Mammary epithelial cell (primary cell): ENCODE measurements at regions of chr1 and their contacts with region 1.

Region 1: GRCh38 chr1:39098546-39099250 is 72.5 kb downstream of the NDUFS5 start:
- DNase-seq: peak; percentile 88
- H3K4me3 ChIP-seq: no peak overlapping the region
- H3K27ac ChIP-seq: peak overlapping the region; percentile 24
- H3K4me1 ChIP-seq: peaks cover 20% of the 10 kb centered on the region
- H3K27me3 ChIP-seq: no peaks in the 10 kb centered on the region
- CTCF ChIP-seq: peak; percentile 82 to 86

Region 2: DNA sequence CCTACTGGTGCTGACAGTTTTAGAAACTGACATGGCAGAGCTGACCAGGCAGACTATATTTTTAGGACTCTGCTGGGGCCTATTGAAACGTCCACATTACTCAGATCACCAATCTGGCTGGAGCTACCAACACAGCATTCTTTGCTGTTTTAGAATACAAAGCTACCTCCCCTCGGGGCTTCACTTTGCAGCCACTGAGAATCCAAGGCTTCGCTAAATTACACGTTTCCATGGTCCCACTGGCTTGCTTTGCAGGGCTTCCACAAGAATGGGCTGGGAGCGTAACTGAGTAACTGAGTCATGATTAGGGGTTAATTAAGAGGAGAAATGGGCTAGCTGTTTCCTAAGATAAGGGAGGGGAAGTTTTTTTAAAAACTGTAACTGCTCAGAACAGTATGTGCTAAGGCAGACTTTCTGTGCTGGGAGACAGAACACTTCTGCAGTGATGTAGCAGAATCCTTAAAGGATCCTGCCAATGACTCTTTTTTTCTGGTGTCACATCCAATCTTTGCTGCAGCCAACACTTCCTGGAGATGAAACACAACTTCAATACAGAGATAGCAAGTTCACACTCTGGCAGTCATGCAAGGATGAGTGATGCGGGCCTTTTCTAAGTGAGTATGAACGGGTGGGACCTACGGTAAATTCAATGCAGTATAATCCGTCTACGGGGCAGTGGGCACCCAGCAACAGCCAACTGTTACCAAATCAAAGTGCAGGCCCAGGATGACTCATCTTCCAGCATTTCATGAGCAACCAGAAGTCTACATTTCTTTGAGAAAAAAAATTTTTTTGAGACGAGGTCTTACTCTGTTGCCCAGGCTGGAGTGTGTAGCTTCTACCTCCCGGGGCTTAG is 51.1 kb before region 1 on chr1:
- CTCF ChIA-PET with region 1: no interaction called
- dilution Hi-C with region 1: loop called (anchors 5 kb)
- in situ Hi-C with region 1: no loop called
- intact Hi-C with region 1: no loop called
- DNase-seq: peak; percentile 12
- H3K4me3 ChIP-seq: no peak overlapping the region
- H3K27ac ChIP-seq: no peak overlapping the region
- H3K4me1 ChIP-seq: no peaks in the 10 kb centered on the region
- H3K27me3 ChIP-seq: no peaks in the 10 kb centered on the region
- CTCF ChIP-seq: no peak

Region 3: DNA sequence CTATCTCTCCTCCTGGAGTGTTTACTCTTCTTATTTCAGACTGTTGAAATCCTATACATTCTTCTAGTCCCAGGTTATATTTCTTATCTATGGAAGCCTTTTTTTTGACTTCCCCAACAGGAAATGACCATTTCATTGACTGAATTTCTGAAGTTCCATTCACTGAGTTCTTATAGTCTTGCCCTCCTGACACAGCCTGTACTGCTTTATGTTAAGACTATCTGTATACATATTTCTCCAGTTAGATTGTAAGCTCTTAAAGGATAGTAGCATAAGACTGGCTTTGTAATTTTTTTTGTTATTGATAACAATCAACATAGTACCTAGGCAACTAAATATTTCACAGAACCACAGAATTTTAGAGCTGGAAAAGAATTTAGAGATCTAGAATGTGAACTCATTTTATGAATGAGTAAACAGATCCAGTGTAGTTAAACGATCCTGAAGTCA is 90.9 kb after region 1 on chr1:
- CTCF ChIA-PET with region 1: interaction called, 7 read pairs
- dilution Hi-C with region 1: loop called (anchors 5 kb)
- in situ Hi-C with region 1: loop called (anchors 5 kb)
- intact Hi-C with region 1: loop called (anchors 1 kb)
- DNase-seq: peak; percentile 63
- H3K4me3 ChIP-seq: no peak overlapping the region
- H3K27ac ChIP-seq: peak overlapping the region; percentile 96
- H3K4me1 ChIP-seq: peaks cover 69% of the 10 kb centered on the region
- H3K27me3 ChIP-seq: no peaks in the 10 kb centered on the region
- CTCF ChIP-seq: no peak

Region 4: DNA sequence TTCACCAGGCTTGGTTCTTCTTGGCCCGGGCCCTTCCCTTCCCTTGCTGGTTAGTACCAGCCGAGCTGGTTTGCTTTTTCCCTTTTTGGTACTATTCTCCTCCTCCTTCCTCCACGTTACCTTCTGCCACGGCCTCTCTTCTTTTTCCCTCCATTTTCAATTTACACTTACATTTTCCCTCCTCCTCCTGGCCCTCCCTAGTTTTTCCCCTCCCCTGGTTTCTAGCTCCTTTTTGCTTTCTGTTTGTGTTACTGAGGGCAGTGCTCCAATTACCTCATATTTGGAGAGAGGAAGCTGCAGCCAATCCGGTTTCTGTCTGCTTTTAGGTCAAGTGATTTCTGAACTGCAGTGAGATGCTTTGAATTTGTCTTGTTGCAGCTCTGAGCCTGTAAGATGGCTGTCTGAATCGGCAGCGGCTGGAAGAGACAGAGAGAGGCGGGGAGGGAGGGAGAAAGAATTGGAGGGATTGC is 169.4 kb after region 1 on chr1:
- CTCF ChIA-PET with region 1: no interaction called
- dilution Hi-C with region 1: no loop called
- in situ Hi-C with region 1: loop called (anchors 5 to 10 kb)
- intact Hi-C with region 1: no loop called
- DNase-seq: peak; percentile 83
- H3K4me3 ChIP-seq: peak overlapping the region; percentile 17 to 35 (median 18)
- H3K27ac ChIP-seq: peak overlapping the region; percentile 81
- H3K4me1 ChIP-seq: peaks cover 30% of the 10 kb centered on the region
- H3K27me3 ChIP-seq: no peaks in the 10 kb centered on the region
- CTCF ChIP-seq: no peak

Region 5: DNA sequence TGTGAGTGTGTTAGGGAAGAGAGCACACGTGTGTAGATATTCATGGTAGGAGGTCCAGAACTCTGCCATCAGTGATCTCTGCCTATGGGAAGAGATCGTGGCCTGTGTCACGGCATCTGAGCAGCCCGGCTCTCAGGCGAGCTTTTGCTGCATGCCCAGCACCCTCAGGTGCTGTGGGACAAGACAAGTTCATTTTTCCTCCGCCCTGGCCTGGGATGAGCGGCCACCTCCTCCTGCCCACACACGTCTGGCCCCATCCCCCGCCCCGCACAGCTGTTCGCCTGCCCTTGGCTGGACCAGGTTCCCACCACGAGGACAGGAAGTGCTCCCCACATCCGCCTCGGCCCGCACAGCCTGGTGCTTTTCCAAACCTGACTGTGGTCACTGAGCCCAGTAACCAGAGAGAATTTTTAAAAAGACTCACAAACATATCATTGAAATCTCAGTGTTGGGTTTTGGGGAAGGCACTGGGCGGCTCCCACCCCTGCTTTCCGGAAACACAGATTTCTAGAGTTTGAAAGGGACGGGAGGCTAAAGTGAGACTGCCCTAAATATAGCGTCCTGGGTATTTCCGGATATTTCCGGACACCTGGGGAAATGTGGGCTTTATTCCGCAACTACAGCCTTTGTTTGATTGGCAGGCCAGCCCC is 410.8 kb after region 1 on chr1:
- CTCF ChIA-PET with region 1: no interaction called
- dilution Hi-C with region 1: no loop called
- in situ Hi-C with region 1: no loop called
- intact Hi-C with region 1: loop called (anchors 2 kb)
- DNase-seq: peak; percentile 66
- H3K4me3 ChIP-seq: no peak overlapping the region
- H3K27ac ChIP-seq: no peak overlapping the region
- H3K4me1 ChIP-seq: peaks cover 9% of the 10 kb centered on the region
- H3K27me3 ChIP-seq: no peaks in the 10 kb centered on the region
- CTCF ChIP-seq: no peak

Region 6: GRCh38 chr1:39653546-39654031 is 554.9 kb after region 1 on chr1:
- CTCF ChIA-PET with region 1: no interaction called
- dilution Hi-C with region 1: no loop called
- in situ Hi-C with region 1: loop called in 1 of 2 experiments (anchors 25 kb)
- intact Hi-C with region 1: loop called (anchors 1 kb)
- DNase-seq: peak; percentile 81
- H3K4me3 ChIP-seq: no peak overlapping the region
- H3K27ac ChIP-seq: no peak overlapping the region
- H3K4me1 ChIP-seq: no peaks in the 10 kb centered on the region
- H3K27me3 ChIP-seq: no peaks in the 10 kb centered on the region
- CTCF ChIP-seq: peak; percentile 80 to 92